Activated naive CD4-positive, alpha-beta T cell treated with anti-CD3 and anti-CD28 coated beads for 36 hours (primary cell): ENCODE measurements at regions of chr10 and their contacts with region 1.

Region 1: GRCh38 chr10:86446987-86447386 is 74.6 kb downstream of the WAPL start:
- DNase-seq: no peak
- H3K4me3 Mint-ChIP-seq: no peak overlapping the region
- H3K27ac Mint-ChIP-seq: peak overlapping the region; percentile 48
- H3K4me1 Mint-ChIP-seq: peaks cover 34% of the 10 kb centered on the region
- H3K27me3 Mint-ChIP-seq: no peaks in the 10 kb centered on the region

Region 2: DNA sequence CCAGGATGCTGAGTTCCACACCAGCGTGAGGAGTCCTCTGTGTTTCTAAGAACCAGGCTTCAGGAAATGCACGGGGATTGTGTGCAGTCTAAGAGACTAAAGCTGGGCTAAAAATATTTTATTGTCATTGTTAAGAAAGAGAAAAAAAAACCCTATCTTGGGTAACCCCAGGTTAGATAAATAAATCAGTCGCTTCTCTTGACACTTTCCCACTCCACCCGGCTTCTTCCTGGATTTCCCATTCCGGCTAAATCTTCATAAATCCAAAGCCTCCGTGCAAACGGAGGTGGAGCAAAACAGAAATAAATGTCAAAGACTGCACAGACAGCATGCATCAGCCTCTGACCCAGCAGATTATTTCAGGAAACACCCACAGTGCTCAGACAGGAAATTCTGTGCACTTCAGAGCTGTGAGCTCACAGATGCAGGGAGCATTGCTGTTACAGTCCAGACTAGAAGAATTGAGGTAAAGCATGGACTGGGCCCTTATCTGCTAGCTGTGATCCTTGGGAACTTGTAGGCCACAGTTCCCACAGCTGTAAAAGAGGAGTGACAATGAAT is 35.6 kb before region 1 on chr10:
- CTCF ChIA-PET with region 1: no interaction called
- intact Hi-C with region 1: loop called (anchors 2 kb)
- DNase-seq: peak; percentile 68
- H3K4me3 Mint-ChIP-seq: peak overlapping the region; percentile 60
- H3K27ac Mint-ChIP-seq: peak overlapping the region; percentile 85
- H3K4me1 Mint-ChIP-seq: peaks cover 45% of the 10 kb centered on the region
- H3K27me3 Mint-ChIP-seq: no peaks in the 10 kb centered on the region